Calu3 (cell line): ENCODE measurements at regions of chr7 and their contacts with region 1.

Region 1: GRCh38 chr7:150753826-150754603 is 16.8 kb downstream of the GIMAP5 start:
- DNase-seq: no peak
- H3K4me3 Mint-ChIP-seq: no peak overlapping the region
- H3K27ac Mint-ChIP-seq: no peak overlapping the region
- H3K4me1 Mint-ChIP-seq: no peaks in the 10 kb centered on the region
- H3K27me3 Mint-ChIP-seq: peaks cover 49% of the 10 kb centered on the region
- CTCF ChIP-seq: no peak

Region 2: GRCh38 chr7:150448789-150449147 is 305.2 kb before region 1 on chr7:
- CTCF ChIA-PET with region 1: interaction called, 6 read pairs
- intact Hi-C with region 1: loop called (anchors 1 kb)
- DNase-seq: peak; percentile 85
- H3K4me3 Mint-ChIP-seq: no peak overlapping the region
- H3K27ac Mint-ChIP-seq: no peak overlapping the region
- H3K4me1 Mint-ChIP-seq: peaks cover 8% of the 10 kb centered on the region
- H3K27me3 Mint-ChIP-seq: peaks cover 58% of the 10 kb centered on the region
- CTCF ChIP-seq: peak; percentile 87

Region 3: GRCh38 chr7:150538259-150538658 is 215.8 kb before region 1 on chr7:
- CTCF ChIA-PET with region 1: no interaction called
- intact Hi-C with region 1: loop called (anchors 10 kb)
- DNase-seq: no peak
- H3K4me3 Mint-ChIP-seq: no peak overlapping the region
- H3K27ac Mint-ChIP-seq: no peak overlapping the region
- H3K4me1 Mint-ChIP-seq: no peaks in the 10 kb centered on the region
- H3K27me3 Mint-ChIP-seq: peaks cover 5% of the 10 kb centered on the region
- CTCF ChIP-seq: no peak